Tibial artery (tissue), 4 donors: ENCODE measurements at regions of chr6 and their contacts with region 1.

Region 1: GRCh38 chr6:86477500-86478148 is 459.7 kb upstream of the HTR1E start:
- DNase-seq: no peak
- H3K4me3 ChIP-seq: no peak overlapping the region
- H3K27ac ChIP-seq: no peak overlapping the region
- H3K4me1 ChIP-seq: no peaks in the 10 kb centered on the region
- H3K27me3 ChIP-seq: no peaks in the 10 kb centered on the region
- CTCF ChIP-seq: no peak

Region 2: DNA sequence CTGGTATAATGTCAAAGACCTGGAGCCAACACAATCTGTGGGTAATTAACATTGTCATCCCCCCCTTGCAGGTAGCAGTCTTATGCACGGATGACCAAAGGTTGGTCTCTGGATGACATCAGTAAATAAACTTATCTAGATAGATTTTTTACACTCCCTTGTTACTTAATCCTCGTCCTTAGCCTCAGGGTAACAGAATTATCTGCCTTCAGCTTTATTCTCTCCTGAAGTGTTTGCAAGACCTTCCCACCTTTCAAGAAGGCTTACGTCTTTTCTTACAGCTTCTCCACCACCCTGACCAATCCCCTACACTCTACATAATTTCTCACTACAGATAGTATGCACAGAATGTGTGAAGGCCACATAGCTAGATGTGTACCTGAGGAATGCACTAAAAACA is 24.9 kb after region 1 on chr6:
- intact Hi-C with region 1: loop called (anchors 2 kb)
- DNase-seq: no peak
- H3K4me3 ChIP-seq: no peak overlapping the region
- H3K27ac ChIP-seq: no peak overlapping the region
- H3K4me1 ChIP-seq: no peaks in the 10 kb centered on the region
- H3K27me3 ChIP-seq: no peaks in the 10 kb centered on the region
- CTCF ChIP-seq: no peak

Region 3: DNA sequence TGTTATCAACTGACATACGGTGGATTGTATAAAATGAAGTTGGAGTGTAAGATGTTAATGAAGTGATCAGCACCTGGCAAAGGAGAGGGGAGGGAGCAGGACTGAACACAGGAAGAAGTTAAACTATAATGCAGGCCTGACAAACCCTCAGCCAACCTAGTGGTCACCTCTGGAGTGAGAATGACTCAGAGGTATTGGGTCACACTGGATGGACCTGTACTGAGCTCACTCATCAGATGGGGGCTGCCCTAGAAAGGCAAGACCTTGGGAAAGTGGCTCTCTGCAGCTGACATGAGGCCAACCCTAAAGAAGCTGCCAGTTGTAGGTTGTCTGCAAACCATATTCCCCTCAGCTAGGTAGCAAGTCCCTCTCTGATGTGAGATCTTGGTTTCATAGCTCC is 266.4 kb after region 1 on chr6:
- intact Hi-C with region 1: no loop called
- DNase-seq: no peak
- H3K4me3 ChIP-seq: no peak overlapping the region
- H3K27ac ChIP-seq: no peak overlapping the region
- H3K4me1 ChIP-seq: no peaks in the 10 kb centered on the region
- H3K27me3 ChIP-seq: no peaks in the 10 kb centered on the region
- CTCF ChIP-seq: no peak

Region 4: GRCh38 chr6:86973088-86973487 is 495.5 kb after region 1 on chr6:
- intact Hi-C with region 1: no loop called
- DNase-seq: no peak
- H3K4me3 ChIP-seq: no peak overlapping the region
- H3K27ac ChIP-seq: no peak overlapping the region
- H3K4me1 ChIP-seq: no peaks in the 10 kb centered on the region
- H3K27me3 ChIP-seq: no peaks in the 10 kb centered on the region
- CTCF ChIP-seq: no peak

Region 5: GRCh38 chr6:87115402-87116135 is 637.9 kb after region 1 on chr6:
- intact Hi-C with region 1: no loop called
- DNase-seq: no peak
- H3K4me3 ChIP-seq: no peak overlapping the region
- H3K27ac ChIP-seq: no peak overlapping the region
- H3K4me1 ChIP-seq: no peaks in the 10 kb centered on the region
- H3K27me3 ChIP-seq: no peaks in the 10 kb centered on the region
- CTCF ChIP-seq: no peak